PC-3 (cell line): ENCODE measurements at regions of chr2 and their contacts with region 1.

Region 1: GRCh38 chr2:11477994-11478393 is 12.0 kb upstream of the E2F6 start:
- DNase-seq: peak; percentile 93
- ATAC-seq: peak; percentile 86
- H3K4me3 ChIP-seq: no peak overlapping the region
- H3K27ac ChIP-seq: no peak overlapping the region
- H3K4me1 ChIP-seq: no peaks in the 10 kb centered on the region
- H3K27me3 ChIP-seq: no peaks in the 10 kb centered on the region
- CTCF ChIP-seq: peak; percentile 95

Region 2: GRCh38 chr2:11446733-11447248 is 31.2 kb before region 1 on chr2:
- CTCF ChIA-PET with region 1: no interaction called
- POLR2A ChIA-PET with region 1: no interaction called
- intact Hi-C with region 1: no loop called
- DNase-seq: peak; percentile 66
- ATAC-seq: peak; percentile 70
- H3K4me3 ChIP-seq: no peak overlapping the region
- H3K27ac ChIP-seq: no peak overlapping the region
- H3K4me1 ChIP-seq: no peaks in the 10 kb centered on the region
- H3K27me3 ChIP-seq: no peaks in the 10 kb centered on the region
- CTCF ChIP-seq: peak; percentile 93

Region 3: DNA sequence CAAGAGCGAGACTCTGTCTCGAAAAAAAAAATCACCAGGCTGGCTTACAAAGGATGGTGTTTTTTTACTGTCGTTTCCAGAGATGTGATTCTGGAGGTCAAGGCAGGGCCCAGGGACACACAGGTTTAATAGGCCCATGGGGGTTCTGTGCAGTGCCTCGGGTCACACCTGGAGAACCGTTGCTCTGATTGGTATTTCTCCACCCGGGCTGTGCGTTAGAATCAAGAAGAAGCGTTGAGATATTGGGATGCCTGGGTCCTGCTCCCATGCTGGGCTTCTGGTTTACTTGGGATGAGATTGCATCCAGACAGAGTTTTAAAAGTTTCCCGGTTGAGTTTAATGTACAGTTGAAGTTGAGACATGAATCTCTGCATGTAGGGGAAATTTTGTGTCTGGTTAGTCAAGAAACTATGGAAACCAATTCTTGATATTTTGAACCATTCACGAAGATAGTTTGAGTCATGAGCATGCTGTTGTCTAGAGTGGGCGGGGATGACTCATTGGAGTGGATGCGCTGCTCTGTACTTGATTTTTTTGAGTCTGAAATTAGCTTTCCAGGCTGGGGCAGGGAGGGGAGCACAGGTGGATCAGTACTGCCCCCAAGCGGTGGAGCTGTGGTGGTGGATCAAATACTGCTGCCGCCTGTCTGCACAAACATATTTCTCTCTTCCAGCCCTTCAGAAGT is 106.0 kb after region 1 on chr2:
- CTCF ChIA-PET with region 1: interaction called, 26 read pairs
- POLR2A ChIA-PET with region 1: no interaction called
- intact Hi-C with region 1: loop called (anchors 1 kb)
- DNase-seq: peak; percentile 89
- ATAC-seq: peak; percentile 85
- H3K4me3 ChIP-seq: no peak overlapping the region
- H3K27ac ChIP-seq: no peak overlapping the region
- H3K4me1 ChIP-seq: no peaks in the 10 kb centered on the region; the same call in 1 of the 2 replicates
- H3K27me3 ChIP-seq: no peaks in the 10 kb centered on the region
- CTCF ChIP-seq: peak; percentile 96

Region 4: DNA sequence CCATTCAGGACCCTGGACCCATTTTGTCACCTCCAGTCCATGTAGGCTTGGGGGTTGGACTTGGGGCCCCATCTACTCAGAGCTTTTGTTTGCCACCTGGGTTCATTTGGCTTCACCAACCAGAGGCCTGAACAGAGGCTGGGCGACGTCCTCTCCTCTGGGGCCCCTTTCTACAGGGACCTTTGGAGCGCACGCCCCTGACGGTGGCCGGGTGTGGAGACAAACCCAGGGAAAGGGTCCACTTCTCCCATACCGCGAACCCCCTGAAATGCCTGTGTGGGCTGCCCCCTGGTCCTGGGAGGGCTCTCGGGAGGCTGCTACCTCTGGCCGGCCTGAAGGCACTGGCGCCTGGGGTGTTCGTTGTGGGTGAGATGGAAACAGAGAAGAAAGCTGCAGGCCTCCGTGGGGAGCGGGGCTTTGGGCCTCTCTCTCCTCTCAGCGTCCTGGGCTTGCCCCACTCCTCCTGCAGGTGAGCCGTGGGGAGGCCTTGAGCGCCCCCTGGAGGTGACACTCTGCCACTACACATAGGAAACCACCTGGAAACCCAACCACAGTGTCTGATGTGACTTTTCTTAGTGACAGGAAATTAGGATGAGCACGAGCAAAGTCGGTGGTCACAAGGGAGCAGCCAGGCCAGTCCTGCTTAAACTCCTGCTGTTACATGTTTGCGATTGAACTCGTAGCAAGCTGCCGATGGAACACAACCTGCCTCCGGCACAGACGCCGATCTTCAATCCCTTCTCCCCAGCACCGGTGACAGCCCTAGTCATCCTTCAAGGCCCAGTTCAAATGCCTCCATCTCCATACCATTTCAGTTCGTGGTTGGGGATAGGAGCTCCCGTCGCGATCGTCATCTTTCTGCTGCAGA is 204.0 kb after region 1 on chr2:
- CTCF ChIA-PET with region 1: no interaction called
- POLR2A ChIA-PET with region 1: no interaction called
- intact Hi-C with region 1: loop called (anchors 1 kb)
- DNase-seq: peak; percentile 78
- ATAC-seq: peak; percentile 80
- H3K4me3 ChIP-seq: no peak overlapping the region
- H3K27ac ChIP-seq: no peak overlapping the region
- H3K4me1 ChIP-seq: no peaks in the 10 kb centered on the region
- H3K27me3 ChIP-seq: no peaks in the 10 kb centered on the region
- CTCF ChIP-seq: peak; percentile 95

Region 5: GRCh38 chr2:11778923-11779757 is 301.1 kb after region 1 on chr2:
- CTCF ChIA-PET with region 1: no interaction called
- POLR2A ChIA-PET with region 1: no interaction called
- intact Hi-C with region 1: loop called (anchors 1 kb)
- DNase-seq: peak; percentile 86
- ATAC-seq: peak; percentile 98
- H3K4me3 ChIP-seq: no peak overlapping the region
- H3K27ac ChIP-seq: no peak overlapping the region
- H3K4me1 ChIP-seq: peaks cover 8% of the 10 kb centered on the region; the same call in 1 of the 2 replicates
- H3K27me3 ChIP-seq: no peaks in the 10 kb centered on the region
- CTCF ChIP-seq: peak; percentile 97